Breast epithelium (tissue), 4 donors: ENCODE measurements at regions of chr3 and their contacts with region 1.

Region 1: DNA sequence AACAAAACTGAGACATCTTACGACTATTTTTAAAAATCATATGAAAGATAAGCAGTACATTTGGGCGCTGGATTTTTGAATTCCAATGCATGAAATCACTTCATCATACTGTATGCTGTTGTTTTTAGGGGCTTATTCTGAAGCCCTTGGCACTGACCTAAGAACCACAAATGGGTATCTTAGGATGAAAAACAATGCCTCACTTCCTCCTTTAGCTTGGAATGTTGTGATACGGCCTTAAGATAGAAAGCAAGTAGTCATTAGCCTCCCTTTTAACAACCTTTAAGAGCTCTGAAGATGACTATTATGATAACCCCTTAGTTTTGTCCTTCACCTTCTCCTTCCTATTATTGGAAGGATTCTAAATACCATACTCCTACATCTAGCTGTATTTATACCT is 289.8 kb downstream of the ARPP21 start:
- DNase-seq: no peak
- H3K4me3 ChIP-seq: no peak overlapping the region
- H3K27ac ChIP-seq: no peak overlapping the region
- H3K4me1 ChIP-seq: no peaks in the 10 kb centered on the region
- H3K27me3 ChIP-seq: no peaks in the 10 kb centered on the region
- CTCF ChIP-seq: no peak
- POLR2A ChIP-seq: no peak

Region 2: GRCh38 chr3:36305929-36306520 is 376.9 kb after region 1 on chr3:
- intact Hi-C with region 1: loop called (anchors 10 kb)
- DNase-seq: no peak
- H3K4me3 ChIP-seq: no peak overlapping the region
- H3K27ac ChIP-seq: no peak overlapping the region
- H3K4me1 ChIP-seq: no peaks in the 10 kb centered on the region
- H3K27me3 ChIP-seq: no peaks in the 10 kb centered on the region
- CTCF ChIP-seq: no peak
- POLR2A ChIP-seq: no peak